Esophagus squamous epithelium (tissue), 5 donors: ENCODE measurements at regions of chr10 and their contacts with region 1.

Region 1: DNA sequence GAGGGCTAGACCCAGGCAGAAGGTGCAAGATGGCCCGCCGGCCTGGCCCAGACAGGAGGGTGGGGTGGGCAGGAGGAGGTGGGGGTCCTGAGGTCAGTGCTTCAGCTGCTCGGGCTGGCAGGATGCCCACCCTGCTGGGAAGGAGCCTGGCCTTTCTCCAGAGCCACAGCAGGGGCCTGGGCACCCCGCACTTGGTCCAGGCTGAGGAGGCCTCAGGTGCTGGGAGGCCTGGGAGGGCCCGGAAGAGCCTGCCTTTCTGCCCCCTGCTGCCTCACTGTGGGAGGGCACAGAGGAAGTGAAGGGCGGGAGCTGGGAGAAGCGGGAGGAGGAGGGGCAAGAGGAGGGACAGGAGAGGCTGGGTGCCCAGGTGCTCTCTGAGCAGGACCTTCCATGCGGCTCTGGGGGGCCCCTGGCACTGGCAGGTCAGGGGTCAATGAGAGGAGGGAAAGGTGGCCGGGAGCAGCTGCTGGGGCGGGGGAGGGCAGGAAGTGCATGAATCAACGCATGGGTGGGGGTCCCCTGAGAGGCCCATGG is 49.7 kb downstream of the PWWP2B start:
- DNase-seq: no peak
- H3K4me3 ChIP-seq: peak overlapping the region; percentile 17 to 42 (median 26)
- H3K27ac ChIP-seq: peak overlapping the region; percentile 94 to 99 (median 97)
- H3K4me1 ChIP-seq: peaks cover 21 to 52% (median 22%) of the 10 kb centered on the region in 3 donors
- H3K27me3 ChIP-seq: no peaks in the 10 kb centered on the region
- CTCF ChIP-seq: peak; percentile 36 to 87 (median 72)
- POLR2A ChIP-seq: peak in 1 of 4 donors; percentile 76

Region 2: DNA sequence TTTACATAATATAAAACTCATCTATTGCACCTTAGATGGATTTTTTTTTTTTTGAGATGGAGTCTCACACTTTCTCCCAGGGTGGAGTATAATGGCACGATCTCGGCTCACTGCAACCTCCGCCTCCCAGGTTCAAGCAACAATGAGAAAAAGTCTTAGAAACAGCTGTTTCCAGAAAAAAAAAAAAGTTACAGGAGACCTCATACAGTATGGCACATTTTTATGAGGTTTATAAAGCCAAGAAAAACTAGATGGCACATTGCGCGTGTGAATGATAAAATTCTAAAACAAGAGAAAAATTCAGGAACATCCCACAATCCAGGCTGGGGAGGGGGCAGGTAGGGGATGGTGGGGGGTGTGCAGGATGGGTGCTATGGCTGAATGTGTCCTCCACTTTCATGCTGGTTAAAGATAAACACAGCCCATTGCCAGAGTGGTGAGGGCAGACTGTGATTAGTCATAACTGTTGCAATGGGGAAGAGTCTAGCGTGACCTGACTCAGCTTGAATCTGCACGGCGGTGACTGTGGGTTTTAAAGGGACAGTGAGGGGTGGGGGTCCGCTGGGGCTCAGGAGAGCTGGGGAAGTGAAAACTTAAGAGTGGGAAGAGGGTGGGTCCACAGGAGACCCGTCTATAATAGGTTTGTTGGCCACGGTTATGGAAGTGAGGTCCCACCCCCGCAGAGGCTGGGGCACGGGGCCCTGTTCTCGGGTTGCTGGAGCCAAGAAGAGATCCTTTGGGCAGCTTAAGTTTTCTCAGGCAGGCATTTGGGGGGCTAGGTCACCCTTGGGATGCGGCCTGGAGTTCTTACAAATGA is 126.7 kb before region 1 on chr10:
- intact Hi-C with region 1: no loop called
- DNase-seq: no peak
- H3K4me3 ChIP-seq: peak overlapping the region in 1 of 4 donors; percentile 5
- H3K27ac ChIP-seq: peak overlapping the region in 1 of 4 donors; percentile 4
- H3K4me1 ChIP-seq: peaks cover 0 to 10% (median 9%) of the 10 kb centered on the region in 3 donors
- H3K27me3 ChIP-seq: no peaks in the 10 kb centered on the region
- CTCF ChIP-seq: no peak
- POLR2A ChIP-seq: no peak

Region 3: GRCh38 chr10:132407814-132408278 is 38.9 kb before region 1 on chr10:
- intact Hi-C with region 1: loop called (anchors 5 kb)
- DNase-seq: no peak
- H3K4me3 ChIP-seq: peak overlapping the region in 3 of 4 donors; percentile 25 to 46 (median 34)
- H3K27ac ChIP-seq: peak overlapping the region; percentile 88 to 95 (median 91)
- H3K4me1 ChIP-seq: peaks cover 55 to 96% (median 69%) of the 10 kb centered on the region in 3 donors
- H3K27me3 ChIP-seq: no peaks in the 10 kb centered on the region
- CTCF ChIP-seq: peak in 1 of 6 experiments; percentile 9
- POLR2A ChIP-seq: peak in 1 of 4 donors; percentile 53